ENCODE measurements at regions of chr22 and their contacts with region 1.

Region 1: GRCh38 chr22:28741758-28742561 is at the starts of genes CHEK2 and HSCB:
- DNase-seq: peak; percentile 99
- H3K4me3 Mint-ChIP-seq: peak within 1 kb of the TSS; percentile 89
- H3K27ac Mint-ChIP-seq: peak within 1 kb of the TSS; percentile 96
- H3K4me1 Mint-ChIP-seq: peaks cover 20% of the 10 kb centered on the region
- H3K27me3 Mint-ChIP-seq: no peaks in the 10 kb centered on the region
- total RNA-seq, gene CHEK2: 47.8 to 52.6 TPM
- total RNA-seq, gene HSCB: 12.7 to 13.3 TPM

Region 2: GRCh38 chr22:28402539-28402938 is 339.4 kb before region 1 on chr22:
- CTCF ChIA-PET with region 1: no interaction called
- intact Hi-C with region 1: loop called (anchors 1 kb)
- DNase-seq: peak; percentile 5
- H3K4me3 Mint-ChIP-seq: no peak overlapping the region
- H3K27ac Mint-ChIP-seq: peak overlapping the region; percentile 67
- H3K4me1 Mint-ChIP-seq: peaks cover 9% of the 10 kb centered on the region
- H3K27me3 Mint-ChIP-seq: no peaks in the 10 kb centered on the region

Region 3: DNA sequence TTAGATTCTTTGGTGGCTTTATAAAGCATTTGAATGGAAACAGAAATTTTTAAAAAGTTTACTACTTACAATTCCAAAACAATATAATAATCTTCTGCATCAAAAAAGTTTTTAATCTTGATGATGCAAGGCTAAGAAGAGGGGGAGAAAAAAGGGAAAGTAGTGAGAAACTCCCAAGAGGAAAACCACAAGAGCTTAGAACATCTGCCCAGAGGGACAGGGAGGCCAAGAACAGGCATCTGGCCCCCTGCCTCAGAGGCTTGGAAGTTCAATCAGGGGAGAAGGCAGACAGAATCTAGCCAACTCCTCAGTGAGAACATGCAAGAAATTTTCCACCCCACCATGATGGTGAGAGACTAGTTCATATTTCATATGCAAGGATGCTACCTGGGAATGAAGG is 38.5 kb before region 1 on chr22:
- CTCF ChIA-PET with region 1: no interaction called
- intact Hi-C with region 1: no loop called
- DNase-seq: no peak
- H3K4me3 Mint-ChIP-seq: no peak overlapping the region
- H3K27ac Mint-ChIP-seq: no peak overlapping the region
- H3K4me1 Mint-ChIP-seq: no peaks in the 10 kb centered on the region
- H3K27me3 Mint-ChIP-seq: no peaks in the 10 kb centered on the region

Region 4: DNA sequence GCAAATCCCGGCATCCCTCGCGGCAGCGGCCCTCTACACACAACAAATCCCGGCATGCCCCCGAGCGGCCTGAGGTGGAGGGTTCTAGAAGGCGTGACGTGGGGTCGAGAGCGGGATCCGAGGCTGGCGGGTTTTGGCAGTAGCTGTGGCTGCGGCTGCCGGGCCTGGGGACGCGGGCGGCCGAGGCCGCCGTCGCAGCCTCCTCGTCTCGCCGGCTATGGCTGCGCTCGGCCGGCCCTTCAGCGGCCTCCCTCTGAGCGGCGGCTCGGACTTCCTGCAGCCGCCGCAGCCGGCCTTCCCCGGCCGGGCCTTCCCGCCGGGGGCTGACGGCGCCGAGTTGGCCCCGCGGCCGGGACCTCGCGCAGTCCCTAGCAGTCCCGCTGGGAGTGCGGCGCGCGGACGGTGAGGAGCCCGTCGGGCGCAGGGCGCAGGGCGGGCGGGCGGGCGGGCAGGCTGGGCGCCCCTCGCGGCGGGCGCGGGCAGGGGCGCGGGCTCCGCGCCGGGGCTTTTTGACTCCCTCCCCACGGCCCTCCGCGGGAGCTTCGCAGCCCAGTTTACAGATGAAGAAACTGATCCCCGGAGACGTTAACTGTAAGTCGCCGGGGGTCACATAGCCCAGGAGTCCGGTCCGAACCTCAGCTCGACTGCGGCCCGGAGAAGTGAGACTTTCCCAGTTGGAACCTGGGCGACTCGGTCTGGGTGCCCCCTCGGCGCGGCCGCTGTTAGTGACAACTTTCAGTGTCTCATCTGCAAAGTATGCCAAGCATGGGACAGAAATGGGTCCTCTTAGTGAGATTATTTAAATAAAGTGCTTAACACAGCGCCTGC is 30.9 kb after region 1 on chr22 and contains the start of gene CCDC117:
- CTCF ChIA-PET with region 1: no interaction called
- intact Hi-C with region 1: loop called (anchors 1 kb)
- DNase-seq: peak; percentile 97
- H3K4me3 Mint-ChIP-seq: peak within 1 kb of the TSS; percentile 99
- H3K27ac Mint-ChIP-seq: peak within 1 kb of the TSS; percentile 98
- H3K4me1 Mint-ChIP-seq: peaks cover 29% of the 10 kb centered on the region
- H3K27me3 Mint-ChIP-seq: no peaks in the 10 kb centered on the region
- total RNA-seq, gene CCDC117: 28.2 to 28.6 TPM

Region 5: GRCh38 chr22:28783786-28784671 is 42.1 kb after region 1 on chr22:
- CTCF ChIA-PET with region 1: no interaction called
- intact Hi-C with region 1: no loop called
- DNase-seq: no peak
- H3K4me3 Mint-ChIP-seq: no peak overlapping the region
- H3K27ac Mint-ChIP-seq: no peak overlapping the region
- H3K4me1 Mint-ChIP-seq: peaks cover 7% of the 10 kb centered on the region
- H3K27me3 Mint-ChIP-seq: no peaks in the 10 kb centered on the region

Region 6: GRCh38 chr22:28829358-28830181 is 87.6 kb after region 1 on chr22:
- CTCF ChIA-PET with region 1: interaction called, 4 read pairs
- intact Hi-C with region 1: loop called (anchors 1 kb)
- DNase-seq: peak; percentile 86
- H3K4me3 Mint-ChIP-seq: no peak overlapping the region
- H3K27ac Mint-ChIP-seq: no peak overlapping the region
- H3K4me1 Mint-ChIP-seq: peaks cover 10% of the 10 kb centered on the region
- H3K27me3 Mint-ChIP-seq: no peaks in the 10 kb centered on the region

Region 7: DNA sequence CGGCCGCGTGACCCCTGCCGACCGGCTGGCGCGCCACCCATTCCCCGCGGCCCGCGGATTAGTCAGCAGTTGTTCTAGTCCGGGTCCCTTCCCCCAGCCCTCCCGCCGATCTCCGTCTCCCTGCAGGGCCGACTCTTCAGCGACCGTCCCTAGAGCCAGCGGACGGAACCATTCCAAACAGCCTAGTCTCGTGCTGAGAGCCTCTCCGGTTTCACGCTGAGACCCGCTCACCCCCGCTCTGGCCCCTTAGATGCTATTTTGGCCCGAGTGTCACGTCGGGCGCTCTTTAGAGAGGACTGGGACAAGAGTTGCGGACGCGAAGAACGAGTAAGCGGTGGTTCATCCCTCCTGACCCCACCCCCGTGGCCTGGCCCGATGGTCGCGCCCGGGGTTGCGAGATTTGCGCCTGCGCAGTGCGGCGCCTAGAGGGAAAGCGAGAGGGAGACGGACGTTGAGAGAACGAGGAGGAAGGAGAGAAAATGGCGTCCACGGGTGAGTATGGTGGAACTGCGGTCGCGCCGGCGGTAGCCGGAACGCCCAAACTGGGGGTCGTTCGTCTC is 526.0 kb after region 1 on chr22 and contains the starts of genes EWSR1 and RHBDD3:
- CTCF ChIA-PET with region 1: no interaction called
- intact Hi-C with region 1: loop called (anchors 1 kb)
- DNase-seq: peak; percentile 94
- H3K4me3 Mint-ChIP-seq: peak within 1 kb of the TSS; percentile 99
- H3K27ac Mint-ChIP-seq: peak within 1 kb of the TSS; percentile 100
- H3K4me1 Mint-ChIP-seq: peaks cover 39% of the 10 kb centered on the region
- H3K27me3 Mint-ChIP-seq: no peaks in the 10 kb centered on the region
- total RNA-seq, gene EWSR1: 274 to 303 TPM
- total RNA-seq, gene RHBDD3: 17.6 to 20.5 TPM